ENCODE measurements at regions of chr22 and their contacts with region 1.

Region 1: GRCh38 chr22:39170825-39171622 is 18.5 kb upstream of the CBX7 start:
- DNase-seq: peak; percentile 91
- ATAC-seq: peak; percentile 82
- H3K4me3 ChIP-seq: peak overlapping the region in 4 of 5 experiments; percentile 30 to 50 (median 46)
- H3K4me3 Mint-ChIP-seq: peak overlapping the region; percentile 88
- H3K27ac ChIP-seq: peak overlapping the region; percentile 44 to 81
- H3K27ac Mint-ChIP-seq: peak overlapping the region; percentile 92
- H3K4me1 ChIP-seq: peaks cover 32 to 45% of the 10 kb centered on the region in 2 donors
- H3K4me1 Mint-ChIP-seq: peaks cover 40% of the 10 kb centered on the region
- H3K27me3 ChIP-seq: no peaks in the 10 kb centered on the region
- H3K27me3 Mint-ChIP-seq: peaks cover 3% of the 10 kb centered on the region
- CTCF ChIP-seq: peak; percentile 99

Region 2: DNA sequence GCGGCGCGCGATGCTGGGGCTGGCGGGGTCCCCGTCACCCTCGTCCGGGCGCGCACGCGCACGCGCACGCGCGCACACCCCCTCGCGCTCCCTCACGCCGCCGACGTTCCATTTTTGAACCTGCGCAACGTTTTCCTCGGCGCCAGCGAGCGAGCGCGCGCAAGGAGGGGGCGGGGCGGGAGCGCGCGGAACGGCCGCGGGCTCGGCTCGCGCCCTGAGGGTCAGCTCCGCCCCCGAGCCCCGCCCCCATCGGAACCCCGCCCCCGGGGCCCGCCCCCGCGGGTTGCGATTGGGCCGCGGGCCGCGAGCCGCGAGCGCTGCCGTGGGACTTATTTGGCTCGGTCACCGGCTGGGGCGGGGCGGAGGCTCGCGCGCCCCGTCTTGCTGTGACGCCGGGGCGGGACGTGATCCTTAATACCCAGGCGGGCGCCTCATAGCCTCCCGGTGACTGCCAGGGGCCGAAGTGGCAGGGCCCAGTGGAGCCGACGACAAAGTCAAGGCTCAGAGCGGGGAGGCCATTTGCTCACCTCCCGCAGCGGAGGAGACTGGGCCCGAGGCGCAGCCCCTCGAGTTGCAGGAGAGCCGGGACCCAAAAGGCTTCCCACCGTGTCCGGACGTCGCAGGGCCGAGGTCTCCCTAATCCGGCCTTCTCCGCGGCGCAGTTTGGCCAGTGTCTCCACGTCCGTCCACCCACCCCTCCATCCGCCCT is 18.4 kb before region 1 on chr22 and contains the start of gene CBX7:
- CTCF ChIA-PET with region 1: interaction called, 28 read pairs
- POLR2A ChIA-PET with region 1: interaction called, 3 read pairs
- intact Hi-C with region 1: no loop called
- DNase-seq: peak; percentile 96
- ATAC-seq: peak; percentile 88
- H3K4me3 ChIP-seq: peak within 1 kb of the TSS; percentile 53 to 97 (median 87)
- H3K4me3 Mint-ChIP-seq: peak within 1 kb of the TSS; percentile 90
- H3K27ac ChIP-seq: peak within 1 kb of the TSS; percentile 81 to 97
- H3K27ac Mint-ChIP-seq: peak within 1 kb of the TSS; percentile 90
- H3K4me1 ChIP-seq: peaks cover 51 to 53% of the 10 kb centered on the region in 2 donors
- H3K4me1 Mint-ChIP-seq: peaks cover 43% of the 10 kb centered on the region
- H3K27me3 ChIP-seq: peaks cover 0 to 14% (median 8%) of the 10 kb centered on the region in 4 experiments
- H3K27me3 Mint-ChIP-seq: peaks cover 33% of the 10 kb centered on the region
- CTCF ChIP-seq: no peak
- total RNA-seq, gene CBX7: 141 and 147 TPM in 2 replicates

Region 3: GRCh38 chr22:39253435-39254070 is 82.5 kb after region 1 on chr22:
- CTCF ChIA-PET with region 1: interaction called, 3 read pairs
- POLR2A ChIA-PET with region 1: no interaction called
- intact Hi-C with region 1: loop called (anchors 5 kb)
- DNase-seq: no peak
- ATAC-seq: peak; percentile 17
- H3K4me3 ChIP-seq: no peak overlapping the region
- H3K4me3 Mint-ChIP-seq: no peak overlapping the region
- H3K27ac ChIP-seq: no peak overlapping the region
- H3K27ac Mint-ChIP-seq: no peak overlapping the region
- H3K4me1 ChIP-seq: peaks cover 10 to 14% of the 10 kb centered on the region in 2 donors
- H3K4me1 Mint-ChIP-seq: peaks cover 11% of the 10 kb centered on the region
- H3K27me3 ChIP-seq: peaks cover 0 to 71% (median 31%) of the 10 kb centered on the region in 4 experiments
- H3K27me3 Mint-ChIP-seq: peaks cover 56% of the 10 kb centered on the region
- CTCF ChIP-seq: no peak

Region 4: DNA sequence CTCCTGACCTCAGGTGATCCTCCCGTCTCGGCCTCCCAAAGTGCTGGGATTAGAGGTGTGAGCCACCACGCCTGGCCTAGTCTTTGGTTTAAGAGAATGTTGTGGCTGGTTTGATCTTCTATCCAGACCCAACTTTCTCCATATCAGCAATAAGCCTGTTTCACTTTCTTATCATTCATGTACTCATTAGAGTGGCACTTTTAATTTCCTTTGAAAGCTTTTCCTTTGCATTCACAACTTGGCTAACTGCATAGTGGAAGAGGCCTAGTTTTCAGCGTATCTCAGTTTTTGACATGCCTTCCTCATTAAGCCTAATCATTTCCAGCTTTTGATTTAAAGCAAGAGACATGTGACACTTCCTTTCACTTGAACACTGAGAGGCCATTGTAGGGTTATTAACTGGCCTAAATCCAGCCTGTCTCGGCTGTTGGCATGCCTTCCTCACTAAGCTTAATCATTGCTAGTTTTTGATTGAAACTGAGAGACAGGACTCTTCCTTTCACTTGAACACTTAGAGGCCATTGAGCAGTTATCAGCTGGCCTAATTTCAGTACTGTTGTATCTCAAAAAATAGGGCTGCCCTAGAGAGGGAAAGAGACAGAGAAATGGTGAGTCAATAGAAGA is 161.5 kb after region 1 on chr22:
- CTCF ChIA-PET with region 1: interaction called, 16 read pairs
- POLR2A ChIA-PET with region 1: no interaction called
- intact Hi-C with region 1: no loop called
- DNase-seq: no peak
- ATAC-seq: no peak
- H3K4me3 ChIP-seq: no peak overlapping the region
- H3K4me3 Mint-ChIP-seq: no peak overlapping the region
- H3K27ac ChIP-seq: no peak overlapping the region
- H3K27ac Mint-ChIP-seq: no peak overlapping the region
- H3K4me1 ChIP-seq: no peaks in the 10 kb centered on the region
- H3K4me1 Mint-ChIP-seq: no peaks in the 10 kb centered on the region
- H3K27me3 ChIP-seq: no peaks in the 10 kb centered on the region
- H3K27me3 Mint-ChIP-seq: no peaks in the 10 kb centered on the region
- CTCF ChIP-seq: no peak

Region 5: DNA sequence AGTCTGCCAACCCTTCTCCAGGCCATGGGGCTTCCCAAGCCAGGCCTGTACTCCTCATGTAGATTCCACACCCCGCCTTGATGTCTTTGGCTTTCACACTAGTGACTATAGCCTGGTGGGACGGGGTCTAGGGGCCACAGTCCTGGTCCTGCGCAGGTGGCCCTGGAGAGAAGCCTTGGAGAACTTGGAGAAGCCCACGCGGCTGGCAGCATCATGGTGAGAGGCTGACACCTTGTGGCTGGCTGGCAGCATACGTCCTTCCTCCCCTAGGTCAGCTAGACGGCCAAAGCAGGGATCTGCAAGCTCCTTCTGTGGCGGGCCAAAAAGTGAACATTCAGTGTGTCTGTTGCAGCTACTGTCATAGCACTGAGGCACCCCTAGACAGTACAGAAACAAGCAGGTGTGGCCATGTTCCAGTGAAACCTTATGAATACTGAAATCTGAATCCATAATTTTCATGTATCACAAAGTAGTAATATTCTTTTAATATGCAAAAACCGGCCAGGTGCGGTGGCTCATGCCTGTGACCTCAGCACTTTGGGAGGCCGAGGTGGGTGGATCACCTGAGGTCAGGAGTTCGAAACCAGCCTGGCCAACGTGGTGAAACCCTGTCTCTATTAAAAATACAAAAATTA is 865.7 kb after region 1 on chr22:
- CTCF ChIA-PET with region 1: interaction called, 9 read pairs
- POLR2A ChIA-PET with region 1: no interaction called
- intact Hi-C with region 1: loop called (anchors 2 kb)
- DNase-seq: peak; percentile 73
- ATAC-seq: peak; percentile 88
- H3K4me3 ChIP-seq: no peak overlapping the region
- H3K4me3 Mint-ChIP-seq: no peak overlapping the region
- H3K27ac ChIP-seq: no peak overlapping the region
- H3K27ac Mint-ChIP-seq: no peak overlapping the region
- H3K4me1 ChIP-seq: peaks cover 0 to 5% of the 10 kb centered on the region in 2 donors
- H3K4me1 Mint-ChIP-seq: peaks cover 2% of the 10 kb centered on the region
- H3K27me3 ChIP-seq: peaks cover 0 to 43% (median 10%) of the 10 kb centered on the region in 4 experiments
- H3K27me3 Mint-ChIP-seq: peaks cover 26% of the 10 kb centered on the region
- CTCF ChIP-seq: peak; percentile 78

Measured in B cell (primary cell).